ENCODE measurements at regions of chr16 and their contacts with region 1.

Region 1: GRCh38 chr16:89330177-89330856 is 112.8 kb downstream of the ZNF778 start:
- DNase-seq: peak; percentile 88
- H3K4me3 Mint-ChIP-seq: peak overlapping the region; percentile 45
- H3K27ac Mint-ChIP-seq: peak overlapping the region; percentile 42
- H3K4me1 Mint-ChIP-seq: peaks cover 62% of the 10 kb centered on the region
- H3K27me3 Mint-ChIP-seq: no peaks in the 10 kb centered on the region
- CTCF ChIP-seq: no peak

Region 2: DNA sequence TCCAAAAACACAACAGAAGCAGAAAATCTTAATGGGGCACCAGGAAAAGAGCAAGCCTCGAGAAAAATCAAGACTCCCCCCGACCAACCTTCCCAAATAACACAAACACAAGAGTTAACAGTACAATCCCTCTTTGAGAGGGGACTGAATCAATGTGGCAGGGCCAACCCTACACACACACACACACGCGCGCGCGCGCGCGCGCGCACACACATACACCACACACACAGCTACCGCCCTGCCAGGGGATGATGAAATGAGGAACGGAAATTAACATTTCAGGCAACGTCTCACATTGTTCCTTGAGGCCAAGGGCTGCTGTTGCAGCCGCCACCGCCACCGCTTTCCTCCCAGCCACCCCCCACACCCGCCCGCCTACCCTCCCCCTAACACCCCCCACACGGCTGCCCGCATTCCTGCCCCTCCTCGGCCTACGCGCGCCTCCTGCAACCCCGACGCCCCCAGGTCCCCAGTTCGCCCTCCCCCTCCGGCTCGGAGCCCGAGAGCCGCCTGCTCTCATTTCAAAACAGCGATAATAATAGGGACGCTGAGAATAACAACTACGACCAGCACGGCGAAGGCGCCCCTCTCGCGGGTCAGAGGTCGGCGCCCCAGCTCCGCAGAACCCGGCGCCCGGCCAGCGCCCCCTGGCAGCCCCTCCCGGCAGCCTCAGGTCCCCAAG is 158.9 kb after region 1 on chr16:
- CTCF ChIA-PET with region 1: no interaction called
- intact Hi-C with region 1: loop called (anchors 5 kb)
- DNase-seq: peak; percentile 86
- H3K4me3 Mint-ChIP-seq: peak overlapping the region; percentile 85
- H3K27ac Mint-ChIP-seq: peak overlapping the region; percentile 79
- H3K4me1 Mint-ChIP-seq: peaks cover 45% of the 10 kb centered on the region
- H3K27me3 Mint-ChIP-seq: no peaks in the 10 kb centered on the region
- CTCF ChIP-seq: no peak

Region 3: GRCh38 chr16:89507834-89508590 is 177.7 kb after region 1 on chr16 and contains the start of gene SPG7:
- CTCF ChIA-PET with region 1: interaction called, 8 read pairs
- intact Hi-C with region 1: loop called (anchors 5 kb)
- DNase-seq: peak; percentile 96
- H3K4me3 Mint-ChIP-seq: peak within 1 kb of the TSS; percentile 64
- H3K27ac Mint-ChIP-seq: peak within 1 kb of the TSS; percentile 94
- H3K4me1 Mint-ChIP-seq: peaks cover 20% of the 10 kb centered on the region
- H3K27me3 Mint-ChIP-seq: no peaks in the 10 kb centered on the region
- CTCF ChIP-seq: no peak
- total RNA-seq, gene SPG7: 174 and 186 TPM in 2 replicates

Region 4: DNA sequence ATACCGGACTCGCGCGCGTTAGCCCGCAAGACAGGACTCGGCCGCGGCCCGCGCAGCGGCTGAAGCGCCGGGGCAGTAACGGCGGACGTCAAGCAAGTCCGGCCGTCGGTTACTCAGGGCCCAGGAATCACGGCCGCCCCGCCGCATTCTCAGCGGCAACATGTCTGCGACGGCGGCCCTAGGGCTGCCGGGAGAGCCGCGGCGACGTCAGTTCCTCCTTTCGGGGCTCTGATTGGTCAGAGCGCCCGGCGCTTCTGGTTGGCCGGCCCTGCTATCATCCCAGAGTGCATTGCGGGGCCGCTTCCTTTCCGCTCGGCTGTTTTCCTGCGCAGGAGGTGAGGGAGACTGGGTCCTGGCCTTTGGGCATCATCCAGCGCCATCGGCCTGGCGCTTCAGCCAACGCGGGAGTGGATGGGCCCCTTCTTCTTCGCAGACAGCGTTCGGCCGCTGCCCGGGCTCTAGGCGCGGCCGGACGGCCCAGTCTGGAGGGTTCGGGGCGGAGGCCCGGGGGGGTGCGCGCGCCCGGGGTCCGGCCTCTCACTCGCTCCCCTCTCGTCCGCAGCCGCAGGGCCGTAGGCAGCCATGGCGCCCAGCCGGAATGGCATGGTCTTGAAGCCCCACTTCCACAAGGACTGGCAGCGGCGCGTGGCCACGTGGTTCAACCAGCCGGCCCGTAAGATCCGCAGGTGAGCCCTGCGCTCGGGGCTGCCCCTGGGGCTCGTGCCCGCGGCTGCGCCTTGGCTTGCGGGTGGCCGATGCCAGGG is 230.2 kb after region 1 on chr16 and contains the start of gene RPL13:
- CTCF ChIA-PET with region 1: no interaction called
- intact Hi-C with region 1: loop called (anchors 5 kb)
- DNase-seq: peak; percentile 96
- H3K4me3 Mint-ChIP-seq: peak within 1 kb of the TSS; percentile 96
- H3K27ac Mint-ChIP-seq: peak within 1 kb of the TSS; percentile 99
- H3K4me1 Mint-ChIP-seq: peaks cover 39% of the 10 kb centered on the region
- H3K27me3 Mint-ChIP-seq: no peaks in the 10 kb centered on the region
- CTCF ChIP-seq: no peak
- total RNA-seq, gene RPL13: 1,719 and 1,779 TPM in 2 replicates

Measured in Calu3 (cell line).